Heart right ventricle (tissue), 16 donors: ENCODE measurements at regions of chr5 and their contacts with region 1.

Region 1: GRCh38 chr5:50962934-50963872 is 296.8 kb downstream of the PARP8 start:
- DNase-seq: peak; percentile 54 to 66
- ATAC-seq: peak; percentile 71 to 91 (median 85)
- H3K4me3 ChIP-seq: peak overlapping the region in 9 of 10 donors; percentile 34 to 57 (median 49)
- H3K27ac ChIP-seq: no peak overlapping the region
- H3K4me1 ChIP-seq: peaks cover 0 to 39% (median 25%) of the 10 kb centered on the region in 9 donors
- H3K27me3 ChIP-seq: peaks cover 17 to 96% (median 83%) of the 10 kb centered on the region in 7 donors
- CTCF ChIP-seq: peak; percentile 71 to 91 (median 86)

Region 2: DNA sequence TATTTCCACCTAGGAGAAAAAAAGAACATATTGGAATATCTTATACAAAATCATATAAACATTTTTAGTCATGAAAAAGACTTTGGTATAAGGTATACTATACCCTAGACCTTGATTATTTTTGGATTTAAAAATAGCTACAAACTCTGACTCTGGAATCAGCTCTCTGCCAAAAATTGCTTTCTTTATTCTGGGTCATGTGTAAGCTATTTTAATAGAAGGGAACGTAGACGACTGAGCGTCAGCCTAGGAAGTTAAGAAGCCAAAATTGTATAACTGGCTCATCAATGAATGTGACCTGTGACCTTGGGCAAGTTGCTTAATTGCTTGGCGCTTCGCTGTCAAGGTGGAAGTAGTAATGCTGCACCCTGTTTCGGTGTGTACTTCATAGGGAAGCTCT is 139.6 kb before region 1 on chr5:
- intact Hi-C with region 1: no loop called
- DNase-seq: no peak
- ATAC-seq: peak in 4 of 8 donors; percentile 17 to 58 (median 51)
- H3K4me3 ChIP-seq: no peak overlapping the region
- H3K27ac ChIP-seq: peak overlapping the region in 2 of 10 donors; percentile 23 to 41
- H3K4me1 ChIP-seq: peaks cover 0 to 11% (median 0%) of the 10 kb centered on the region in 9 donors
- H3K27me3 ChIP-seq: no peaks in the 10 kb centered on the region
- CTCF ChIP-seq: no peak

Region 3: GRCh38 chr5:52007230-52007858 is 1044.1 kb after region 1 on chr5:
- intact Hi-C with region 1: loop called in 9 of 10 experiments (anchors 5 to 10 kb)
- DNase-seq: peak in 1 of 2 donors; percentile 13
- ATAC-seq: no peak
- H3K4me3 ChIP-seq: no peak overlapping the region
- H3K27ac ChIP-seq: no peak overlapping the region
- H3K4me1 ChIP-seq: no peaks in the 10 kb centered on the region
- H3K27me3 ChIP-seq: peaks cover 0 to 4% (median 0%) of the 10 kb centered on the region in 7 donors
- CTCF ChIP-seq: peak; percentile 13 to 65 (median 53)

Region 4: GRCh38 chr5:52657247-52657645 is 1694.0 kb after region 1 on chr5:
- intact Hi-C with region 1: loop called (anchors 5 to 10 kb)
- DNase-seq: no peak
- ATAC-seq: no peak
- H3K4me3 ChIP-seq: no peak overlapping the region
- H3K27ac ChIP-seq: no peak overlapping the region
- H3K4me1 ChIP-seq: peaks cover 0 to 7% (median 0%) of the 10 kb centered on the region in 9 donors
- H3K27me3 ChIP-seq: peaks cover 0 to 21% (median 0%) of the 10 kb centered on the region in 7 donors
- CTCF ChIP-seq: peak in 8 of 9 donors; percentile 42 to 80 (median 66)

Region 5: DNA sequence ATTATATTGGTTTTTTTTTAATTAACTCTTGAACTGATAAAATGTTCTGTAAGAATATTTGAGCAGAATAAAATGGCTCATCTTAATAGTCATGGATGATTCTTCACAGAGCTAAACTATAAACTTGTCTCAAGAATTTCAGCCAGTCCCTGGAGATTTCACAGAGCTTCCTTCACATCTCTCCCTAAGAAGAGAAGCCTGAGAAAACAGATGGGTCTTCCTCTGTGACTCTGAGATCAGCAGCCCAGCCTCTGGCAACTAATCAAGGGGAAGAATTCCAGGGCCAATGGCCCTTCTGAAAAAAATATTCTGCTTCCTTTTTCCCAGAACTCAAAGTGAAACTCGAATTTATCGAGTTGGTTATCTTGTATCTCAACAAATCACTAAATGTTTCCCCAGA is 1702.4 kb after region 1 on chr5:
- intact Hi-C with region 1: loop called in 1 of 10 experiments (anchors 5 kb)
- DNase-seq: peak in 1 of 2 donors; percentile 64
- ATAC-seq: peak in 7 of 8 donors; percentile 59 to 91 (median 83)
- H3K4me3 ChIP-seq: peak overlapping the region in 3 of 10 donors; percentile 5 to 14 (median 8)
- H3K27ac ChIP-seq: peak overlapping the region in 7 of 10 donors; percentile 2 to 71 (median 56)
- H3K4me1 ChIP-seq: peaks cover 0 to 24% (median 11%) of the 10 kb centered on the region in 9 donors
- H3K27me3 ChIP-seq: no peaks in the 10 kb centered on the region
- CTCF ChIP-seq: no peak